HCT116 (cell line): ENCODE measurements at regions of chr16 and their contacts with region 1.

Region 1: DNA sequence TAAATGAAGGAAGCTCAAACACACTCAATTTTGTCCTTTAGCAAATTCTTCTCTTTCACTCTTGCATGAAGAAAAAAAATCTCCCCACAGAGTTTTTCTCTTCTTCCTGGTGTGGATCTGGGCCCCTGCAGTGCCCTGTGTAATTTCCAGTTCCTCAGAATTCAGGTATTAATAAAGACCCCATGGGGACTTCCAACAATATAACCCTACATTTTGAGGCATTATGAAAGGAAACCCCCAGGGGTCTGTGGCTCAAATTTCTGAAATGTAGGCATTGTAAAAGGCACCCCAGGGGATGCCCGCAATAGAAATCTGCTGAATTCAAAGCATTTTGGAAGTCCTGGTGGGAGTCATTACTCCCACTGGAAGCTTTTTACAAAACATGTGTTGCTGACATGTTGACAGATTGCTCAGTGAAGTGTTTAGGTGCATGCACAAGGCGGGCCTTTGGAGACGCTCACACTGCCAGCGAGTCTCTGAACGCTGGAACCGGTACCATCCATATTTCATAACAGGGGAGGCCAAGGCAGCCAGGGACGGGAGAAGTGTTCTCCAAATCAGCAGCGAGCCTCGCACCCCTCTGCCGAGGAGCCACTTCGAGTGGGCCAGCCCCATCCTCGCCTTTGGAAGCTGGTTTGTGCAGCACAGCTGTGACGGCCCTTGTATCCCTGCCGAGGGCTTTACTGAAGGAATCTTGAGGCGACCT is 154.0 kb downstream of the ZNF423 start:
- DNase-seq: no peak
- ATAC-seq: no peak
- H3K4me3 ChIP-seq: no peak overlapping the region
- H3K27ac ChIP-seq: no peak overlapping the region
- H3K4me1 ChIP-seq: peaks cover 0 to 5% of the 10 kb centered on the region in 2 experiments; a peak in 2 of 4 replicates
- H3K27me3 ChIP-seq: no peaks in the 10 kb centered on the region
- CTCF ChIP-seq: no peak
- POLR2A ChIP-seq: no peak
- RAD21 ChIP-seq: no peak

Region 2: GRCh38 chr16:49556606-49557446 is 145.1 kb before region 1 on chr16:
- CTCF ChIA-PET with region 1: interaction called, 9 read pairs
- POLR2A ChIA-PET with region 1: no interaction called
- RAD21 ChIA-PET with region 1: no interaction called
- intact Hi-C with region 1: loop called (anchors 10 kb)
- DNase-seq: peak; percentile 4
- ATAC-seq: peak; percentile 77
- H3K4me3 ChIP-seq: no peak overlapping the region
- H3K27ac ChIP-seq: no peak overlapping the region
- H3K4me1 ChIP-seq: no peaks in the 10 kb centered on the region
- H3K27me3 ChIP-seq: peaks cover 8% of the 10 kb centered on the region; the same call in 1 of the 2 replicates
- CTCF ChIP-seq: peak; percentile 43 to 69 (median 50); a peak in 4 of 6 replicates
- POLR2A ChIP-seq: no peak
- RAD21 ChIP-seq: peak; percentile 43; the same call in 1 of the 2 replicates